ENCODE measurements at regions of chr9 and their contacts with region 1.

Region 1: DNA sequence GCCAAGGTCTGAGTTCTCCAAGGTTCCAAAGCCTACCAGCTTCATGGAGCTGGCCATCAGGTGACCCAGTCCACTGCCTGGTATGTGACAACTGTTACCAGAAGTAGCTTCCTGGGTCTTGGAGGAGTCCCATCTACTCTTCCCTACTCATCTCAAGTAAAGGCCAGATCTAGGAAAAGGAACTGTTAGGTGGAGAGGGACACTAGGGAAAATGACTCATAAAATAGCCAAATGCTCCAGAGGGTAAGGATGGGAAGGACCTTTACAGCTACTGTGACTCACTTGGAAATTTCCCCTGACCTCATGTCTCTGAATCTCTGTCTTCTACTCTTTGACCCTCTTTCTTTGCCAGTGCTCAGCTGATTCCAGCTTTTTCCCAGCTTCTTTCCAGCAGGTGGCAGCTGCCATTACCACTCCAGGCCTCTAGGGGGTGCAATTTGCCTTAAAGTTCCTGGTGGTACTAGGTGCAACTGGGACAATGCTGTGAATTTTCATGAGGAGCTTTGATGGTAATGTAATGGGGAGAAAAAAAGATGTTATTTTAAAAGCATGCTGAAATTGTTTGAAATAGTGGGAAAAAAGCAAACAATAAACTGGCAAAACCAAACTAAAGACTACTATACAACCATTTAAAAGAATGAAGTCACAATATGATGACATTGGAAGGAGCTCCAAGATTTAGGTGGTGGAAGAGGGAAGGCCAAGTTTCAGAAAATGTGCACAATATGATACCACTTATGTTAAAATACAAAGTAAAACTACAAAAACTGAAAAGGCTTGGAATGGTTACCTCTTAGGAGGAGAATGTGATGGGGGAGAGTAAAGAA is 27.1 kb upstream of the MYORG start:
- H3K4me3 ChIP-seq: no peak overlapping the region
- H3K27ac ChIP-seq: no peak overlapping the region
- H3K4me1 ChIP-seq: no peaks in the 10 kb centered on the region
- CTCF ChIP-seq: peak; percentile 65

Region 2: DNA sequence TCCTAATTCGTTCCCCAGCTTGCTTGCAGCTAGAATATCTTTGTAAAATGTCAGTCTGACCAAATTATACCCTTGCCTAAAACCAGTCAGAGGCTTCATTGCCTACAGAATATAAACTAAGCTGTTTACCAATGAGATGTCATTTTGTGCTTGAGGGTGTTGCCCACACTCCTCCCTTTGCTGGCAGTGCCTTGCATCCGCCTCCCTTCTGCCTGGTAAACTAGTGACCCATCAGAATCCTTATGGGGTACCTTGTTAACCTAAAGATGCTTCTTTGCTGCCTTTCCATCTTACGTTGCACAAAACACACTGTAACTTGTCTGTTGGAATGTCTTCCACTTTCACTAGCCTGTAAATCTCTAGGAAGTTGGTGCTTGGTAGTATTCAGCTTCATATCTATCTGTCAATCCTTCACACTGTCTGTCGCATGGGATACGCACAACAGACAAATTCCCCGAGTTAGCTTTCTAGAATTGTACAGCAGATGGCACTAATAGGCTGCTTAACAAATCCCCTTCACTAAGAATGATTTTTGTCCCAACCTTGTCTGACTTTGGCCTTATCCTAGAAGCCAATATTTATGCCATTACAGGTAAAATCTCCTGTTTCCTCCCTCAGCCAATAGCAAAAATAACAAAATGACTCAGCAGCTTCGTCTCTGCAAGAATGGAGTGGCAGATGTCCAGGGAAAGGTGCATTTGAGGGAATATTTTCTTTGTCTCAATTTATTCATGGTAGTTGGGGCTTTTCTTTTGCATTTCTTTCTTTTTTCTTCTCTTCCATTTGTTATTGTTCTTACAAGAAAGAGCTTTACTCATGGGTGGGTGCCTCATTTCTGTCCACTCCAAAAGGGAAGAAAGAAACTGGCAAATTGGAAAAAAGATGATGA is 71.4 kb before region 1 on chr9:
- CTCF ChIA-PET with region 1: interaction called, 42 read pairs
- POLR2A ChIA-PET with region 1: no interaction called
- H3K4me3 ChIP-seq: no peak overlapping the region
- H3K27ac ChIP-seq: no peak overlapping the region
- H3K4me1 ChIP-seq: no peaks in the 10 kb centered on the region
- CTCF ChIP-seq: peak; percentile 48; the same call in 1 of the 2 replicates

Region 3: GRCh38 chr9:34430843-34431437 is 27.2 kb after region 1 on chr9:
- CTCF ChIA-PET with region 1: interaction called, 33 read pairs
- POLR2A ChIA-PET with region 1: no interaction called
- H3K4me3 ChIP-seq: no peak overlapping the region
- H3K27ac ChIP-seq: no peak overlapping the region
- H3K4me1 ChIP-seq: no peaks in the 10 kb centered on the region
- CTCF ChIP-seq: no peak

Region 4: GRCh38 chr9:34463098-34463900 is 59.5 kb after region 1 on chr9:
- CTCF ChIA-PET with region 1: interaction called, 16 read pairs
- POLR2A ChIA-PET with region 1: no interaction called
- H3K4me3 ChIP-seq: no peak overlapping the region
- H3K27ac ChIP-seq: no peak overlapping the region
- H3K4me1 ChIP-seq: peaks cover 2% of the 10 kb centered on the region; the same call in 1 of the 2 replicates
- CTCF ChIP-seq: no peak

Region 5: GRCh38 chr9:34513567-34514214 is 109.9 kb after region 1 on chr9:
- CTCF ChIA-PET with region 1: interaction called, 19 read pairs
- POLR2A ChIA-PET with region 1: no interaction called
- H3K4me3 ChIP-seq: no peak overlapping the region
- H3K27ac ChIP-seq: no peak overlapping the region
- H3K4me1 ChIP-seq: peaks cover 3% of the 10 kb centered on the region
- CTCF ChIP-seq: no peak

Region 6: GRCh38 chr9:34603610-34604231 is 200.0 kb after region 1 on chr9:
- CTCF ChIA-PET with region 1: interaction called, 45 read pairs
- POLR2A ChIA-PET with region 1: interaction called, 3 read pairs
- H3K4me3 ChIP-seq: no peak overlapping the region
- H3K27ac ChIP-seq: no peak overlapping the region
- H3K4me1 ChIP-seq: no peaks in the 10 kb centered on the region
- CTCF ChIP-seq: peak; percentile 77